Activated naive CD4-positive, alpha-beta T cell treated with anti-CD3 and anti-CD28 coated beads, Interleukin-2, amount 10 ng/mL, durations not matched to agents 7 days and 5 days (primary cell): ENCODE measurements at regions of chr2 and their contacts with region 1.

Region 1: DNA sequence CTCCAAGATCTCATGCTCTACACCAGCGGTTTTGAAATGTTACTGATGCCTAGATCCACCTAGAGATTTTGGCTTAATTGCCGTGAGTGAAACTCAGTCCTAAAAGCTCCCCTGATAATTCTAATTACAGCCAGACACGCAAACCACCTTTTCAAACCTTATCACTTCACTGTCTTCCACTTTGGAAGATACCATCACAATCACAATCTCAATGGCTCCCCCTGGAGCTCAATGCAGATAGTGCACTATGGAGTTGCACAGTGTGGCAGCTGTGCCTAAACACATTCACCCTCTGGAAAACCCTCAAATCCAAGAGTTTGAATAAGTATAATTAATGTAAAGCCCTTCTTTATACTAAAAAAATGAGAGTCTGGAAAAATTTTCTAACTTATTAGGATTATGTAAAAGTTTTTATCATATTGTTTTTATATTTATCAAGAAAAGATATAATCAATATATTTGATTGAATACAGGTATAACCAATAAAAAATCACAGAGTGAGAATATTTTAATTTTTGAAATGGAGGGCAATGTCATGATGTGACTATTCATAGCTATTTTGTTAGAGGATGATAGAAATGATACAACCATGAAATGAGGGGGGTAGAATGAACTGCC is 102.9 kb upstream of the SLC8A1 start:
- DNase-seq: peak; percentile 64
- H3K4me3 Mint-ChIP-seq: no peak overlapping the region
- H3K27ac Mint-ChIP-seq: no peak overlapping the region
- H3K4me1 Mint-ChIP-seq: no peaks in the 10 kb centered on the region
- H3K27me3 Mint-ChIP-seq: no peaks in the 10 kb centered on the region

Region 2: GRCh38 chr2:39913648-39914461 is 640.9 kb before region 1 on chr2:
- CTCF ChIA-PET with region 1: interaction called, 38 read pairs
- DNase-seq: no peak
- H3K4me3 Mint-ChIP-seq: no peak overlapping the region
- H3K27ac Mint-ChIP-seq: no peak overlapping the region
- H3K4me1 Mint-ChIP-seq: peaks cover 14% of the 10 kb centered on the region
- H3K27me3 Mint-ChIP-seq: peaks cover 1% of the 10 kb centered on the region

Region 3: GRCh38 chr2:40540026-40540425 is 14.8 kb before region 1 on chr2:
- CTCF ChIA-PET with region 1: no interaction called
- DNase-seq: no peak
- H3K4me3 Mint-ChIP-seq: no peak overlapping the region
- H3K27ac Mint-ChIP-seq: no peak overlapping the region
- H3K4me1 Mint-ChIP-seq: no peaks in the 10 kb centered on the region
- H3K27me3 Mint-ChIP-seq: no peaks in the 10 kb centered on the region